ENCODE measurements at regions of chr4 and their contacts with region 1.

Region 1: GRCh38 chr4:165612936-165613335 is 234.1 kb downstream of the CPE start:
- DNase-seq: no peak
- H3K4me3 ChIP-seq: no peak overlapping the region
- CTCF ChIP-seq: no peak

Region 2: DNA sequence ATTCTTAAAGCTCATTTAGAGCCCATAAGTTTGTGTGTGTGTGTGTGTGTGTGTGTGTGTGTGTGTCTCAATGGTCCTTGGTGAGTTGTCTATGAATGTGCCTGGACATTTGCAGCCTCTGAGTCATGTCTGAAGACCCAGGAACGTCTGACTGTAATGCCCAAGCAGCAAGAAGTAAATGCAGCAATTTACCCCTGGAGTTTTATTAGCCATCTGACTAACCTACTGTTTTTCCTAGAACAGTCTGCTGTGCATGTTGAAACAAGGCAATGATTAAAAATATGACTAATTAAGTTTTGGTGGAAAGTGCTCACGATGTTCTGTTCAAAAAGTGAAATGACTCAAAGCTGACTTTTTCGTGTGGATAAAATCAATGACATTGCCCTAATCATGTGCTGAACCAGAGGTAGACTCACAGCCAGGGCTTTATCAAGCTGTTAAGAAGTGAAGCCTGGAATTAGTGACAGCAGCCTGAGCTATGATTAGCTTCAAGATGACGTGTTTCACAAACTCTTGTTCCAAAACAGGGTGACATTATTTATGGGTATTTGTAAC is 32.5 kb before region 1 on chr4:
- in situ Hi-C with region 1: loop called (anchors 5 kb)
- DNase-seq: peak; percentile 65
- H3K4me3 ChIP-seq: no peak overlapping the region
- CTCF ChIP-seq: no peak

Measured in astrocyte of the cerebellum (primary cell).